CD8-positive, alpha-beta memory T cell (primary cell): ENCODE measurements at regions of chr22 and their contacts with region 1.

Region 1: GRCh38 chr22:31272522-31273446 is 19.5 kb downstream of the PIK3IP1 start:
- DNase-seq: peak in 3 of 5 donors; percentile 38 to 63 (median 57)
- H3K4me3 ChIP-seq: no peak overlapping the region
- H3K4me3 Mint-ChIP-seq: no peak overlapping the region
- H3K27ac ChIP-seq: no peak overlapping the region
- H3K27ac Mint-ChIP-seq: peak overlapping the region; percentile 55 to 95 (median 80)
- H3K4me1 ChIP-seq: peaks cover 39% of the 10 kb centered on the region
- H3K4me1 Mint-ChIP-seq: peaks cover 41 to 61% (median 43%) of the 10 kb centered on the region in 3 donors
- H3K27me3 ChIP-seq: no peaks in the 10 kb centered on the region
- H3K27me3 Mint-ChIP-seq: no peaks in the 10 kb centered on the region

Region 2: GRCh38 chr22:31130873-31131272 is 141.9 kb before region 1 on chr22:
- CTCF ChIA-PET with region 1: no interaction called
- POLR2A ChIA-PET with region 1: no interaction called
- DNase-seq: no peak
- H3K4me3 ChIP-seq: no peak overlapping the region
- H3K4me3 Mint-ChIP-seq: no peak overlapping the region
- H3K27ac ChIP-seq: no peak overlapping the region
- H3K27ac Mint-ChIP-seq: peak overlapping the region in 1 of 8 donors; percentile 32
- H3K4me1 ChIP-seq: no peaks in the 10 kb centered on the region
- H3K4me1 Mint-ChIP-seq: no peaks in the 10 kb centered on the region
- H3K27me3 ChIP-seq: no peaks in the 10 kb centered on the region
- H3K27me3 Mint-ChIP-seq: peaks cover 4 to 13% of the 10 kb centered on the region in 2 donors

Region 3: GRCh38 chr22:31248138-31248745 is 24.5 kb before region 1 on chr22:
- CTCF ChIA-PET with region 1: interaction called, 14 read pairs
- POLR2A ChIA-PET with region 1: no interaction called
- DNase-seq: peak; percentile 40 to 75 (median 47)
- H3K4me3 ChIP-seq: peak overlapping the region; percentile 30
- H3K4me3 Mint-ChIP-seq: peak overlapping the region in 6 of 7 donors; percentile 60 to 86 (median 74)
- H3K27ac ChIP-seq: no peak overlapping the region
- H3K27ac Mint-ChIP-seq: peak overlapping the region in 6 of 8 donors; percentile 1 to 74 (median 48)
- H3K4me1 ChIP-seq: peaks cover 14% of the 10 kb centered on the region
- H3K4me1 Mint-ChIP-seq: peaks cover 15 to 47% (median 31%) of the 10 kb centered on the region in 3 donors
- H3K27me3 ChIP-seq: no peaks in the 10 kb centered on the region
- H3K27me3 Mint-ChIP-seq: no peaks in the 10 kb centered on the region

Region 4: GRCh38 chr22:31253949-31254348 is 18.8 kb before region 1 on chr22:
- CTCF ChIA-PET with region 1: interaction called, 14 read pairs
- POLR2A ChIA-PET with region 1: no interaction called
- DNase-seq: no peak
- H3K4me3 ChIP-seq: no peak overlapping the region
- H3K4me3 Mint-ChIP-seq: no peak overlapping the region
- H3K27ac ChIP-seq: no peak overlapping the region
- H3K27ac Mint-ChIP-seq: peak overlapping the region in 1 of 8 donors; percentile 45
- H3K4me1 ChIP-seq: no peaks in the 10 kb centered on the region
- H3K4me1 Mint-ChIP-seq: peaks cover 6 to 15% (median 7%) of the 10 kb centered on the region in 3 donors
- H3K27me3 ChIP-seq: no peaks in the 10 kb centered on the region
- H3K27me3 Mint-ChIP-seq: no peaks in the 10 kb centered on the region

Region 5: GRCh38 chr22:31295831-31296657 is 23.3 kb after region 1 on chr22:
- CTCF ChIA-PET with region 1: interaction called, 55 read pairs
- POLR2A ChIA-PET with region 1: interaction called, 146 read pairs
- DNase-seq: no peak
- H3K4me3 ChIP-seq: peak overlapping the region; percentile 23
- H3K4me3 Mint-ChIP-seq: peak overlapping the region in 6 of 7 donors; percentile 6 to 64 (median 58)
- H3K27ac ChIP-seq: no peak overlapping the region
- H3K27ac Mint-ChIP-seq: peak overlapping the region in 6 of 8 donors; percentile 23 to 88 (median 76)
- H3K4me1 ChIP-seq: peaks cover 39% of the 10 kb centered on the region
- H3K4me1 Mint-ChIP-seq: peaks cover 40 to 66% (median 62%) of the 10 kb centered on the region in 3 donors
- H3K27me3 ChIP-seq: no peaks in the 10 kb centered on the region
- H3K27me3 Mint-ChIP-seq: peaks cover 0 to 7% of the 10 kb centered on the region in 2 donors

Region 6: DNA sequence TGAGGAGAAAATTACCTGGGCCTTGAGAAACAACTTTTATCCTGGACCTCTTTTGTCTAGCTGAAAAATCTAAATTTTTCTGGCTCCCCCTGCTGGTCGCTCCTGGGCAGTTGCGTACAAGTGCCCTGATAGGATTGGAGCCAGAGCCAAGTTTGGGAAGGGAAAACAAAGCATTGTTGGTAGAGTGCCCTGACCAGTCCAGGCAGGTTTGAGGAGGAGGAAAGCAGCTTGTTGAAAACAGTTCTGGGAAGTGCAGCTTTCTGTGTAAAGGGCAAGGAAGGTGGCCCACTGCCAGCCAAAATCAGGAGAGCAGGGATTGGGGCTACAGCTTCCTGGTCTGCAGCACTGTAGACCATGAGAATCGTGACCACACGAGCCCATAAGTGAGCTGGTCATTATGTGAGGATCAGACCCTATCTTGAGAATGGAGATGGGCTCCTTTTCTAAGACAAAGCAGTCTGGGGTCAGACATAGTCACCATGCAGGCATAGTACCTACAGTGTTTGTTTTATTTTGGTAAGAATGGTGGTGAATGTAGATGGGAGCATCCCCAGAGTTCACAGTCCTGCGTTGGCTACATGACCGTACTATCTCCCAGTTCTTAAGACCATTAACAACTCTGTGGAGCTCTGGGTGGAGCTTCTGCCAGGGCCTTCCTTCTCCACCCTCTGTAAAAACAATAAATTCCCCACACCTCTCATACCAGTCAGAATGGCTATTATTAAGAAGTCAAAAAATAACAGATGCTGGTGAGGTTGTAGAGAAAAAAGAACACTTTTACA is 40.8 kb after region 1 on chr22:
- CTCF ChIA-PET with region 1: interaction called, 12 read pairs
- POLR2A ChIA-PET with region 1: interaction called, 3 read pairs
- DNase-seq: peak; percentile 45 to 71 (median 51)
- H3K4me3 ChIP-seq: no peak overlapping the region
- H3K4me3 Mint-ChIP-seq: no peak overlapping the region
- H3K27ac ChIP-seq: no peak overlapping the region
- H3K27ac Mint-ChIP-seq: peak overlapping the region in 6 of 8 donors; percentile 2 to 74 (median 8)
- H3K4me1 ChIP-seq: peaks cover 17% of the 10 kb centered on the region
- H3K4me1 Mint-ChIP-seq: peaks cover 6 to 15% (median 10%) of the 10 kb centered on the region in 3 donors
- H3K27me3 ChIP-seq: no peaks in the 10 kb centered on the region
- H3K27me3 Mint-ChIP-seq: no peaks in the 10 kb centered on the region